ENCODE measurements at regions of chr3 and their contacts with region 1.

Region 1: GRCh38 chr3:116256843-116257485 is 188.3 kb downstream of the LSAMP start:
- DNase-seq: no peak
- ATAC-seq: no peak
- H3K4me3 Mint-ChIP-seq: no peak overlapping the region
- H3K27ac Mint-ChIP-seq: no peak overlapping the region
- H3K4me1 Mint-ChIP-seq: no peaks in the 10 kb centered on the region
- H3K27me3 Mint-ChIP-seq: no peaks in the 10 kb centered on the region
- CTCF ChIP-seq: no peak

Region 2: GRCh38 chr3:116569611-116570010 is 312.6 kb after region 1 on chr3:
- CTCF ChIA-PET with region 1: no interaction called
- POLR2A ChIA-PET with region 1: no interaction called
- intact Hi-C with region 1: loop called (anchors 5 kb)
- DNase-seq: no peak
- ATAC-seq: no peak
- H3K4me3 Mint-ChIP-seq: no peak overlapping the region
- H3K27ac Mint-ChIP-seq: no peak overlapping the region
- H3K4me1 Mint-ChIP-seq: no peaks in the 10 kb centered on the region
- H3K27me3 Mint-ChIP-seq: no peaks in the 10 kb centered on the region
- CTCF ChIP-seq: no peak

Measured in activated B cell treated with CpG ODN at 0.5 μM for 24 hours (primary cell).